Breast epithelium (tissue), 4 donors: ENCODE measurements at regions of chr17 and their contacts with region 1.

Region 1: DNA sequence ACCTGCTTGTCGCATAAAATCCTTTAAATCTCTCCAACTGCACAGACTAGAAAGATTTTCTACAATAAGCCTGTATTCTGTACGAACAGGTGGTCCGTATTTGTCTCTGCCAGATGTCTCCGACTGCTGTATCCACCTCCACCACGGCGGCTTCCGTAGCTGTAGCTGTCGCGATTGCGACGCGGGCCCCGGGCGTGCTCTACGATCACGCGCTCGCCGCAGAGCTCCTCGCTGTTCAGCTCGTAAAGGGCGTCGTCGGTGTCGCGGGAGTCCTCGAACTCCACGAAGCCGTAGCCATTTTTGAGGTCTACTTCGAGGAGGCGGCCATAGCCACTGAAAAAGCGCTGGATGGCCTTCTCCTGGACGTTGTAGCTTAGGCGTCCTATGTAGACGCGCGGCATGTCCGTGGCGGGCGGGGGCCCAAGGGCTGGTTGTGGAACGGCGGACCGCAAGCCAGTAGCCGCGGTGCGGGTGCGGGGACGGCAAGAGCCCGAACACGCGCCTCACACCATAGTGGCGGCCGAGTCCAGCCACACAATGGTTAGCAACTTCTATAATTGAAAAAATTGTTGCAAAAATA is 36.1 kb downstream of the ZNF624 start:
- DNase-seq: no peak
- H3K4me3 ChIP-seq: no peak overlapping the region
- H3K27ac ChIP-seq: no peak overlapping the region
- H3K4me1 ChIP-seq: no peaks in the 10 kb centered on the region
- H3K27me3 ChIP-seq: no peaks in the 10 kb centered on the region
- CTCF ChIP-seq: no peak
- POLR2A ChIP-seq: no peak

Region 2: GRCh38 chr17:16676676-16677268 is 59.2 kb after region 1 on chr17:
- intact Hi-C with region 1: no loop called
- DNase-seq: no peak
- H3K4me3 ChIP-seq: no peak overlapping the region
- H3K27ac ChIP-seq: no peak overlapping the region
- H3K4me1 ChIP-seq: no peaks in the 10 kb centered on the region
- H3K27me3 ChIP-seq: no peaks in the 10 kb centered on the region
- CTCF ChIP-seq: no peak
- POLR2A ChIP-seq: no peak

Region 3: DNA sequence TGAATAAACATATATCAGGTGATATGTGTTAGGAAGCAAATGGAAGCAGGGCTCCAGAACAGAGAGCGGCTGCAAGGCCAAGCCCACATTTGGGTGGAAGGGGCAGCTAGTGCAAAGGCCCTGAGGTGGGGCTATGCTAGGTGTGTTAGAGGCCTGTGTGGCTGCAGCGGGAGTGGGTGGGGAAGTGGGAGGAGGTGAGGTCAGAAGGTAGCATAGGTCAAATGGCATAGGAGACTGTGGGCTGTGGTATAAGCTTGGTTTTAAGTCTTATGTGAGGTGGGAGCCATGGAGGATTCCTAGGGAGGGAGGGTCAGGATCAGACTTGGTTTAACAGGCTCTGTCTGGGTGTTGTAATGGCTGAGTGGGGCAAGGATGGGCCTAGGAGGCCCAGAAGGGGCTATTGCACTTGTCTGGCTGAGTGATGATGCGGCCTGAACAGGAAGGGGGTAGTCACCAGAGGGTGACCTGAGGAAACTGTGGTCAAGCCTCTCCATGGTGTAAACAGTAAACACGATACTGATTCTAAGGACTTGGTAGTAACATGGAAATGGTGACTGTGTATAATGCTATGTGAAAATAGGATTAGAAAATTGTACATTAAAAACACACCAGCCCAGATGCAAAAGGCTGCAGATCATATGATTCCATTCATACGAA is 1094.8 kb after region 1 on chr17:
- intact Hi-C with region 1: loop called (anchors 10 kb)
- DNase-seq: no peak
- H3K4me3 ChIP-seq: no peak overlapping the region
- H3K27ac ChIP-seq: peak overlapping the region; percentile 91 to 92
- H3K4me1 ChIP-seq: peaks cover 15 to 48% of the 10 kb centered on the region in 2 donors
- H3K27me3 ChIP-seq: no peaks in the 10 kb centered on the region
- CTCF ChIP-seq: no peak
- POLR2A ChIP-seq: no peak